Panc1 (cell line): ENCODE measurements at regions of chr10 and their contacts with region 1.

Region 1: GRCh38 chr10:91671466-91671865 is 38.6 kb upstream of the PPP1R3C start:
- DNase-seq: no peak
- ATAC-seq: no peak
- H3K4me3 ChIP-seq: no peak overlapping the region
- H3K27ac ChIP-seq: no peak overlapping the region
- H3K4me1 ChIP-seq: no peaks in the 10 kb centered on the region
- H3K27me3 ChIP-seq: 0 out of 2 replicates have a peak, but pooled peaks cover 2% of the 10 kb centered on the region
- CTCF ChIP-seq: no peak

Region 2: GRCh38 chr10:91479583-91479982 is 191.9 kb before region 1 on chr10:
- CTCF ChIA-PET with region 1: no interaction called
- POLR2A ChIA-PET with region 1: interaction called, 11 read pairs
- in situ Hi-C with region 1: no loop called
- intact Hi-C with region 1: no loop called
- DNase-seq: no peak
- ATAC-seq: no peak
- H3K4me3 ChIP-seq: no peak overlapping the region
- H3K27ac ChIP-seq: no peak overlapping the region
- H3K4me1 ChIP-seq: no peaks in the 10 kb centered on the region
- H3K27me3 ChIP-seq: no peaks in the 10 kb centered on the region
- CTCF ChIP-seq: no peak

Region 3: GRCh38 chr10:91604553-91605534 is 66.6 kb before region 1 on chr10:
- CTCF ChIA-PET with region 1: no interaction called
- POLR2A ChIA-PET with region 1: no interaction called
- in situ Hi-C with region 1: no loop called
- intact Hi-C with region 1: no loop called
- DNase-seq: no peak
- ATAC-seq: no peak
- H3K4me3 ChIP-seq: no peak overlapping the region
- H3K27ac ChIP-seq: no peak overlapping the region
- H3K4me1 ChIP-seq: no peaks in the 10 kb centered on the region
- H3K27me3 ChIP-seq: no peaks in the 10 kb centered on the region
- CTCF ChIP-seq: no peak